ENCODE measurements at regions of chr1 and their contacts with region 1.

Region 1: DNA sequence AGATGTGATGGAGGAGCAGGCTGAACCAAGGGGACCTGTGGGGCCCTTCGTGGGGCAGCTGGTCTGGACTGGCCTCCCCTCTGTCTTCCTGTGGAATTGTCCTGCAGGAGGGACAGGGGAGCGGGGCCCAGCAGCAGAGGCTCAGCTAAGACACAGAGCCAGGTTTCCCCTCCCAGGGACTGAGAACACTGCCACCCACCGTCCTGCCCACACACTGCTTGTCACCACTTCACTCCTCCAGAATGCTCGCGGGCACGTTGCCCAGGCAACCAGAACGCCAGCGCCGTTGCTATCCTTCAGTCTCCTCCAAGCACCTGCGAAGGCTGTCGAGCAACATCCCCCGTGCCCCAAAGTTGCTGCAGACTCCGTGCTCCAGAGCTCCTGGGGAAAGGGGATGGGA is 46.4 kb downstream of the AJAP1 start:
- DNase-seq: no peak
- H3K4me3 ChIP-seq: no peak overlapping the region
- H3K27ac ChIP-seq: no peak overlapping the region
- H3K4me1 ChIP-seq: no peaks in the 10 kb centered on the region
- H3K27me3 ChIP-seq: peaks cover 0 to 53% (median 0%) of the 10 kb centered on the region in 5 experiments

Region 2: DNA sequence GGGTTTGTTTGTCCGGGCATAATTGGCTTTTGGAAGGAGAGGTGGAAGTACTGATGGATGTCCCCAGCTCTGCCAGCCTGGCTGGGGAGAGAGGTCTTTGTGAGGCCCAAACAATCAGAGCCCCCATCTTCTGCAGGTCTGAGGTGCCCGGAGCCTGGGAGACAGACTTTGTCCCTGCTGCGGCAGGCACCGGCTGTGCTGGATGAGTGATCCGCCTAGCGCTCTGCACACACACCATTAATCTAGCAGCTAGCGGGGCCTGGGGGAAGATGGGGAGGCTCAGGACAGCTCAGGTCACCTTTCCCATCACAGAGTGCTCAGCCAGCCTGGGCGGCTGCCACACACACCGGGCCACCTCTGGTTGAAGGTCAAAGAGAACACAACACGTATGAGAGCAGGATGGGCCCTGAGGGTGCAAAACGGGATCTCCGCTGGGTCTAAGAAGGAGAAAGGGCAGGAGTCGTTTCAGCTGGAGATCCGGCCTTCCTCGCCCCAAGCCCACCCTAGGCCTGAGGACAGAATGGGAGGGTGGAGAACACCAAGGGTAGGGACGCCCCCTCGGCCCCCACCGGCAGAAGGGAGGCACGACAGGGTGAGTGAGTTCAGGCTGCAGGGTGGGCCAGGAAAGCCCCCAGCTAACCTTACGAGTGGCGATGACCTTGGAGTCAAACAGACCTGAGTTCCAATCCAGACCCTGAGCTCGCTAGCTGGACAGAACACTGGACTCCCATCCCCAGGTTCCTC is 949.7 kb after region 1 on chr1:
- CTCF ChIA-PET with region 1: no interaction called
- POLR2A ChIA-PET with region 1: interaction called, 10 read pairs
- DNase-seq: no peak
- H3K4me3 ChIP-seq: no peak overlapping the region
- H3K27ac ChIP-seq: no peak overlapping the region
- H3K4me1 ChIP-seq: peaks cover 0 to 6% (median 3%) of the 10 kb centered on the region in 4 experiments
- H3K27me3 ChIP-seq: peaks cover 0 to 41% (median 1%) of the 10 kb centered on the region in 5 experiments

Measured in common myeloid progenitor, CD34-positive (primary cell).